ENCODE measurements at regions of chr11 and their contacts with region 1.

Region 1: DNA sequence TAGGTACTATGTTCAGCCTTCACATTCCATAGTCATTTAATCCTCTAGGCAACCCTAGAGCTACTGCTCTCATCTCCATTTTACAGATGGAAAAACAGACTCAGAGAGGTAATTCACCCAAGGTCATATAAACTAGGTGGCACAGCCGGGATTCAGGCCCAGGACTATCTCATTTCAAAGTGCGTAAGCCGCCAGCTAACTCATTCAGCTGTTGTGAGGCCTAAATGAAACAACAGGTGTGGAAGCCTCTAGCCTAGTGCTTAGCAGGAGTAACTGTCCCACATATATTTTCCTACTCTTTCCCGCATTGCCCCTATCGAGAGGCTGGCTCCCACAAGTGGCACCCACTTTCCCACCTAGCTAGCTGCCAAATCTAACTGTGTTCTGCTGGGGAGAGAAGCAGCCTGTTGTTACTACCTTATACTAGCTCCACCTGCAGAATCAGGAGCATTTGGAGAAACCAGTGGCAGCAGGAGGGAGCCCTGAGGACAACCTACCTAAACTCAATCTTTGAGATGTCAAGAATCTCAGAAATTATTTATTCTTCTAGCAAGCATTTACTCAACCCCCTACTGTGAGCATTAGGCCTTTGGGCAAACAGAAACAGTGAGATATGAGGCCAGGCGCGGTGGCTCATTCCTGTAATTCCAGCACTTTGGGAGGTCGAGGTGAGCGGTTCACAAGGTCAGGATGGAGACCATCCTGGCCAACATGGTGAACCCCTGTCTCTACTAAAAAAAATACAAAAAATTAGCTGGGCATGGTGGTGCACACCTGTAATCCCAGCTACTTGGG is 20.9 kb downstream of the PRG3 start:
- DNase-seq: no peak

Region 2: DNA sequence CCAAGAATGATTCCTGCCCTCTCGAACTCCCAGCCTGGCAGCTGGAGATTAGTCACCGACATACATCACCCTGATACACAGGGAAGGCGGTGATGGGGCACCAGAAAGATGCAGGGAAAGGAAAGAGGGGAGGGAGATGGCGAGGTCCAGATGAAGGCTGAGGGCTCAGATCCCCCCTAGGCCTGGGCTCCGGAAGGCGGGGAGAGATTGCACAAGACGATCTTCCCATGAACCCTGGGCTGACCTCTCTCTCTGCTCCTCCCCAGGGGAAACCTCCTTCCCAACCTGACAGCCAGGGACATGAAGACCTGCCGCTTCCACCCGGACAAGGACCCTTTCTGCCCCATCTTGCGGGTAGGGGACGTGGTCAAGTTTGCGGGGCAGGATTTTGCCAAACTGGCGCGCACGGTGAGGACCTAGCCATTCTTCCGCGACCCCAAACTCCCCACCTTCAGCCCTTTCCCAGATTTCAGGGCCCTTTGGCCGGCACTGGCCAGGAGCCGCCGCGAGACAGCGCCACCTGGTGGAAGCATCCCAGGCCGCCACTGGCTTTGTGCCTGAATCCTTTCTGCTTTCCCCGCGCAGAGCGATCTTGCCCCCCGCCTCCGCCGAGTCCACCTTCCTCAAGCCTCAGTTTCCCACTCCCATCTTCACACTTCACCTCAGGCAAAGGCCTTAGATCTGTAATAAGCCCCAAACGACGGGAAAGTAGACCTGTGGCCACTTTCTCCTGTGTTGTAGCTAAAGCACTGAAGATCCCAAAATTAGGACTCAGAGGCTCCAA is 10.4 kb before region 1 on chr11:
- CTCF ChIA-PET with region 1: interaction called, 14 read pairs
- POLR2A ChIA-PET with region 1: no interaction called
- DNase-seq: peak; percentile 81

Region 3: DNA sequence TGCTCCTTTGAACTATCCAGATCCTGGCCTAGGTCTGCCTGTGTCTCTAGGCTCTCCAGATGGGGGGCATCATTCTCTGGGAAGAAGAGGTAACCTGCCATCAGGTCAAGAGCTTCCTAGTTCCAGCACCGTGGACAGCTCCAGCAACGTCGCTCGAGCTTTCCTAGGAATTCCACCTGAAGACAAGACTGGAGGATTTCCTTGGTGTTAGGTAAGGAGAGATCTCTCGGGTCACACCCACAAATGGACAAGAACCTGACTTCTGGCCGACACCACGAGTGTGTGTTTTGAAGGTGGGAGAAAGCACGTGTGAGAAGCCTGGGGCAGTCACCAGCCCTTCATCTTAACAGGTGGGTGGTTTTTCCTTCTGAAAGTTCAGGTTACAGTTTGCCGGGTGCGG is 19.6 kb after region 1 on chr11:
- CTCF ChIA-PET with region 1: no interaction called
- POLR2A ChIA-PET with region 1: no interaction called
- DNase-seq: peak; percentile 26

Region 4: DNA sequence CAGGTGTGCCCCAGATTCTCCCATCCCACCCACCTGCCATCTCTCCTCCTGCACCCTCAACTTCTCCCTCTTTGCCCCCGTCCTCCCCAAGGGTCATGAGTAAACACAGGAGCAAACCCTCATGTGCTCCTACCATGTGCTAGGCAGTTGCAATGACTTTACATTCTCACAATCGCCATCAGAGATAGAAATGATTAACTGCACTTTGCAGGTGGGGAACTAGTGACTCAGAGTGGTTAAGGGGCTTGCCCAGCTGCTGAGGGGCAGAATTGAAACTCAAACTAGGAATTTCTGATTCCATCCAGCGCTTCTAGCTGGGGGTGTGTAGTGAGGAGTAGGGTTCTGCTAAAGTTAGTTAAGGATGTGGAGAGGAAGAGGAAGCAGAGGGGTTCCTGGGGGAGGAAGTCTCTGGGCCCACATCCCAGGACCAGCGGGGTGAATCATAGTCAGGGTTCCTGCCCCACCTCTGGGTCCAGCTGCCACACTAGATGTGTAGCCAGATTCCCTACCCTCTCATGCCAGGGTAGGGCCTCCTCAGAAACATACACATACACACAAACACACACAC is 46.3 kb after region 1 on chr11:
- CTCF ChIA-PET with region 1: no interaction called
- POLR2A ChIA-PET with region 1: no interaction called
- DNase-seq: no peak